Gastrocnemius medialis (tissue), 4 donors: ENCODE measurements at regions of chr6 and their contacts with region 1.

Region 1: DNA sequence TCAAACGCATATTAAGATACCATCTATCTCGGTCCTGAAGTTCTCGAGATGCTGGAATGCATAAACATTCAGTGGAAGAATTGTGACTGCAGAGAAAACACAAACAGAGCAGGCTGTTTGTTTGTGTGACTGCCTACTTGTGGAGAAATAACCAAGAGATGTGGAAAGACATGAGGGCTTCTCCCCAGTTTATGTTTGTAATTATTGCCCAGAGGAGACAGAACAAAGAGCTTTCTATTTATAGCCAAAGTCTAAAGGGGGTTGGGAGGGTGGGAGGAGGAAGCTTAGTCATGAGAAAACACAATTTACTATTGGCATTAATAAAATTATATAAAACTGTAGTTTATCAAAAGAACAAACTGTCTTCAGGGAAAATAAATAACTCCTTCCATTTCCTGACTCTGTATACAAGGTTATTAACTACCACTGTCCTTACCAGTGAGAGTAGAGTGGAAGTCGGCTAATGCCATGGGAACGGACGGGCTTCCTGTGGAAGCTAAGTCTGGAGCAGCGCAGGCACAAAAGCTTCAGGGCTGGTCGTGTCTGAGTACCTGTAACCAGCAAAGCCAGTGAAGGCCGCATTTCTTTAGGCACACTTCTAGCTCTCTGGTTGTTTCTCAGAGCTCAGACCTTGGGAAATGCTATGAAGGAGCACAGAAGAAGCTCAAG is 200.2 kb upstream of the SUPT3H start:
- DNase-seq: no peak
- ATAC-seq: no peak
- H3K4me3 ChIP-seq: no peak overlapping the region
- H3K27ac ChIP-seq: peak overlapping the region in 2 of 4 donors; percentile 10 to 19
- H3K4me1 ChIP-seq: no peaks in the 10 kb centered on the region
- H3K27me3 ChIP-seq: no peaks in the 10 kb centered on the region
- CTCF ChIP-seq: no peak
- POLR2A ChIP-seq: no peak

Region 2: DNA sequence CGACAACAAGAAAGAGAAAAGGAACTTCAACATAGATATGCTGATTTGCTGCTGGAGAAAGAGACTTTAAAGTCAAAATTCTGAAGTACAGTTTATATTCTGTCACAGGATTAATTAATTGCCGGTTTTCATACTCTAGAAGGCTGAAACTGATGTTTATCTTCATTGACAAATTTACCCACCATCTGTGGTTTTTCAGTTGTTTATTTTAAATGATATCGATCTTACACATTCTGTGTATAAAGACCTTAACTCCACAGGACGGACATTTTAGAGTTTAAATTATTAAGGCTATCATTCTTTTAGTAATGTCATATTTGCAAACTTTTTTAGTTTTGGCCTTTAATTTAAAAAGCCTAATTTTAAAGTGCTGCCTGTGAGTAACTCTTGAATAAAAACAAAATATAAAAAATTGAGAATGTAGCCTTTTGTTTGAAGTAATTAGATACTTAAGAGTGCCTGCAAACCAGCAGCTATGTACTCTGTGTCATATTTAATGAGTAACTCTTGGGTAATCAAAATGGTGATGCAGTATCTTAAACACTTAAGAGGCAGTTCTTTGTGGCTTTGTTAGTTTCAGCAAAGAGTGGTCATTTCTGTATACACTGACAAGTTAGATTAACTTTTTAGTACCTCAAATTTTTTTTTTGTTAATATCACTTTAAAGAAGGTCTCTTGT is 1131.2 kb before region 1 on chr6:
- in situ Hi-C with region 1: no loop called
- intact Hi-C with region 1: no loop called
- DNase-seq: no peak
- ATAC-seq: no peak
- H3K4me3 ChIP-seq: no peak overlapping the region
- H3K27ac ChIP-seq: no peak overlapping the region
- H3K4me1 ChIP-seq: peaks cover 14 to 16% of the 10 kb centered on the region in 2 donors
- H3K27me3 ChIP-seq: no peaks in the 10 kb centered on the region
- CTCF ChIP-seq: no peak
- POLR2A ChIP-seq: no peak

Region 3: GRCh38 chr6:45479834-45480751 is 97.9 kb before region 1 on chr6:
- in situ Hi-C with region 1: no loop called
- intact Hi-C with region 1: loop called (anchors 10 kb)
- DNase-seq: no peak
- ATAC-seq: no peak
- H3K4me3 ChIP-seq: no peak overlapping the region
- H3K27ac ChIP-seq: no peak overlapping the region
- H3K4me1 ChIP-seq: peaks cover 14 to 19% of the 10 kb centered on the region in 2 donors
- H3K27me3 ChIP-seq: no peaks in the 10 kb centered on the region
- CTCF ChIP-seq: no peak
- POLR2A ChIP-seq: no peak